Testis (tissue), 5 donors: ENCODE measurements at regions of chr4 and their contacts with region 1.

Region 1: DNA sequence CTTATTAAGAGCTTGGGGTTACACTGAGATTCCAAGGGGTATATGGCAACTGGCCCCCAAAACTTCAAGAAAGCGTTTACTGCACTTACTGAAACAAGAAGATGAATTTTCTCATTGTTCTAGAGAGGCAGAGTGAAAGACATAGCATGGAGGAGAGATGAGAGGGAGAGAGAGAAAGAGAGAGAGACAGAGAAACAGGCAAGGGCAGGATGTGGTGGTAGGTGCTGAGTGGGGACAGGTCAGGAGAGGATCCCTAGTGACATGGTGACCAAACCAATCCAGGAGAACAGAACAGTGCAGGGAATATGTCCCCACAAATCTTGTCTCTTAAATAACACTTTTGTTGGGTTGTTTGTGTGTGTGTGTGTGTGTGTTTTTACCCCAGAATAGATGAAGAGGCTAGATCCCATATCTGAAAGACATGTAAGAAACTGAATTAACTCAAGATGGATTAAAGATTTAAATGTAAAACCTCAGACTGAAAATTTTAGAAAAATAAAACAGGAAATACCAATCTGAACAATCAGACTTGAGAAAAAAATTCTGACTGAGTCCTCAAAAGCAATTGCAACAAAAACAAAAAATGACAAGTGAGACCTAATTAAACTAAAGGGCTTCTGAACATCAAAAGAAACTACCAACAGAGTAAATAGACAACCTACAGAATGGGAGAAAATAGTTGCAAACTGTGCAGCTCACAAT is 202.2 kb downstream of the QDPR start:
- DNase-seq: no peak
- H3K4me3 ChIP-seq: no peak overlapping the region
- H3K27ac ChIP-seq: no peak overlapping the region
- H3K4me1 ChIP-seq: no peaks in the 10 kb centered on the region
- H3K27me3 ChIP-seq: no peaks in the 10 kb centered on the region
- CTCF ChIP-seq: no peak
- POLR2A ChIP-seq: no peak

Region 2: GRCh38 chr4:16752150-16752549 is 557.6 kb before region 1 on chr4:
- intact Hi-C with region 1: loop called (anchors 5 kb)
- DNase-seq: no peak
- H3K4me3 ChIP-seq: no peak overlapping the region
- H3K27ac ChIP-seq: no peak overlapping the region
- H3K4me1 ChIP-seq: no peaks in the 10 kb centered on the region
- H3K27me3 ChIP-seq: no peaks in the 10 kb centered on the region
- CTCF ChIP-seq: peak in 1 of 3 experiments; percentile 19
- POLR2A ChIP-seq: no peak